H1 (cell line): ENCODE measurements at regions of chr16 and their contacts with region 1.

Region 1: GRCh38 chr16:66483689-66484481 is 56.8 kb downstream of the BEAN1 start:
- DNase-seq: peak; percentile 69 to 95
- H3K4me3 ChIP-seq: no peak overlapping the region
- H3K27ac ChIP-seq: no peak overlapping the region
- H3K4me1 ChIP-seq: peaks cover 0 to 5% (median 2%) of the 10 kb centered on the region in 4 experiments; a peak in 4 of 7 replicates
- H3K27me3 ChIP-seq: no peaks in the 10 kb centered on the region
- CTCF ChIP-seq: peak; percentile 97 to 99 (median 99)
- EP300 ChIP-seq: no peak
- POLR2A ChIP-seq: no peak
- RAD21 ChIP-seq: peak; percentile 95 to 97

Region 2: DNA sequence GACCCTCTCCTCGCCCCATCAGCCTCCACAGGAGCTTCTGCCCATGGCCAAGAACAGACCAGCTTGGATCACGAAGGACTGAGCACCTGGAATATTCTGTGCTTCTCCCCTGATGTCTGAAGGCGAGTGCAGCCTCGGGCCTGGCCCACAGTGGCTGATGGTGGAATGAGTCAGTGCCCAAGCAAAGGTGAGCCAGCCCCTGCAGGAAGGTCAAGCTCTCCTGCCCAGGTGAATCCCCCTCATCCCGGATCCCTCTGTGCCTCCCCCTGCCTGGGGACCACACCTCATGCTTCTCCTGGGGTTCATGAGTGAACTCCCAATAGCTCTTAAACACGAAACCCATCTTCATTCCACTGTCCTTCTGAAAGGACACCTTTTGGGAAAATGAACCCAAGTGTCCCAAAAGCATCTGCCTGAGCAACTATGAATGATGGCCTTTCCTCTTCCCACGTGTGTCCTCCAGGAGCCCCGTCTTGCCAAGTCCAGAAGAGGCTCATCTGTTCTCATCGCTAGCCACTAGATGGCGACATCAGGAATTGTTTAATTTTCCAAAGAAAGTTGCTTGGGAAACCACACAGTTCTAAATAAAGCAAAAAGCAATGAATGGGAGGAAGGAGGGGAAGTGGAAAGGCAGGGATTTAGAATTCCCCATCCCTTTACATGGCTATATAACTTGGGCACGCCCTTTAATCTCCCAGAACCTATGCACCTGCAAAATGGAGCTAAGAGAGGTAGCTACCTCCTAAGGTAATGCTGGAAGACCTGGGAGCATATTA is 126.5 kb before region 1 on chr16:
- CTCF ChIA-PET with region 1: interaction called, 14 read pairs
- POLR2A ChIA-PET with region 1: no interaction called
- DNase-seq: peak in 1 of 2 experiments; percentile 27
- H3K4me3 ChIP-seq: no peak overlapping the region
- H3K27ac ChIP-seq: no peak overlapping the region
- H3K4me1 ChIP-seq: peaks cover 0 to 8% (median 1%) of the 10 kb centered on the region in 4 experiments; a peak in 3 of 7 replicates
- H3K27me3 ChIP-seq: peaks cover 0 to 3% (median 0%) of the 10 kb centered on the region in 4 experiments; a peak in 1 of 7 replicates
- CTCF ChIP-seq: peak; percentile 42 to 76 (median 72)
- EP300 ChIP-seq: no peak
- POLR2A ChIP-seq: no peak
- RAD21 ChIP-seq: peak; percentile 44 to 56

Region 3: DNA sequence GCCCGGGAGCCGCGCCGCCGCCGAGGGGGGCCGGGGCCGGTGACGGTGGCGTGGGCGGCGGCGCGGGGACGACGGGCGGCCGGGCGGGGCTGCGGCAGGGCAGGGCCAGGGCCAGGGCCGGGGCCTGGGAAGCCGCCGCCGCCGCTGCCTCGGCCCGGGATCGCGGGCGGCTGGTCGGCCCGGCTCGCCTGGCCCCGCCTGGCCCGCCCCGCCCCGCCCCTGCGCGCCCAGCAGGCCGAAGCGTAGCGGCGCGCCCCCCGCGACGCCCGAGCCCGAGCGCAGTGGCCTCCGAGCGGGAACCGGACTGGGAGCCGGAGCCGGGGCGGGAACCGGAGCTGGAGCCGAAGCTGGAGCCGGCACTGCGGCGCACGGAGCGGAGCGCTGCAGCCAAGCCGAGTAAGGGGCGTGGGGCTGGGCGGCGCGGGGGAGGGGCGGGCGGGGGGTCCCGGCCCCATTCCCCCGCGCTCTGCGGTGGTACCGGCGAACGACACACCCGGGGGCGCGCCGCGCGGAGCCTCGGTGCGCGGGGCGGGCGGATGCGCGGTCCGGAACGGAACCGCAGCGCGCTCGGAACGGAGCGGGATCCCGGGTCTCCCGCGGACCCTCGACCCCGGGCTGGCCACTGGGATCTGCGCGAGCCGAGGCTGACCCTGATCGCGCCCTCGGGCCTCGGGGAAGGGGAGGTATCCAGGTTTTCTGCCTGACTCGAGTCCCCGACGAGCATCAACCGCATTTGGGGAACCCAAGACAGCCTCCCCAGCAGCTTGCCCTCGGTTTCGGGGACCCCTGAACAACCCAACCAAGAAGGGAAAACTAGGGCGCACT is 56.6 kb before region 1 on chr16 and contains the start of gene BEAN1:
- CTCF ChIA-PET with region 1: interaction called, 36 read pairs
- POLR2A ChIA-PET with region 1: no interaction called
- DNase-seq: peak in 1 of 2 experiments; percentile 66
- H3K4me3 ChIP-seq: peak within 1 kb of the TSS; percentile 42 to 65 (median 45)
- H3K27ac ChIP-seq: no peak within 1 kb of the TSS
- H3K4me1 ChIP-seq: peaks cover 0 to 29% (median 21%) of the 10 kb centered on the region in 4 experiments; a peak in 6 of 7 replicates
- H3K27me3 ChIP-seq: peaks cover 49 to 67% (median 59%) of the 10 kb centered on the region in 4 experiments
- CTCF ChIP-seq: no peak
- EP300 ChIP-seq: no peak
- POLR2A ChIP-seq: no peak
- RAD21 ChIP-seq: no peak
- total RNA-seq, gene BEAN1: not detected in 2 replicates

Region 4: DNA sequence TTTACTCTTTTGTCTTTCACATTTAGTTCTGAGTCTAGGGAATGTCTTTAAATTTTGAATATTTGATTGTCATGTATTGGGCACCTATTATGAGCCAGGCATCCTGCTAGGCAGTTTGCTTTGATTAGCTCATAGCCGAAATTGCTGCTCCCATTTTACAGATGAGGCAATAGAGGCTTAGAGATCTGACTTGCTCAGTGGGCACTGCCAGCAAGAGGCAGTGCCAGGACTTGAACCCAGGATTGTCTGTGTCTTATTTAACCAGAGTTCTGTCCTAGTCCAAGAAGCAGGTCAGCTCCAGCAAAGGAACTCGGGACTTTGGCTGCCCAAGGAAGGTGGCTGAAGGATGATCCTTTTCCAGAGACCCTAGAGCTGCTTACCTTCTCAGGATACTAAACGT is 32.3 kb before region 1 on chr16:
- CTCF ChIA-PET with region 1: interaction called, 18 read pairs
- POLR2A ChIA-PET with region 1: no interaction called
- DNase-seq: no peak
- H3K4me3 ChIP-seq: no peak overlapping the region
- H3K27ac ChIP-seq: no peak overlapping the region
- H3K4me1 ChIP-seq: no peaks in the 10 kb centered on the region
- H3K27me3 ChIP-seq: 0 out of 7 replicates have a peak, but pooled peaks cover 0 to 3% (median 0%) of the 10 kb centered on the region in 4 experiments
- CTCF ChIP-seq: no peak
- EP300 ChIP-seq: no peak
- POLR2A ChIP-seq: no peak
- RAD21 ChIP-seq: no peak

Region 5: DNA sequence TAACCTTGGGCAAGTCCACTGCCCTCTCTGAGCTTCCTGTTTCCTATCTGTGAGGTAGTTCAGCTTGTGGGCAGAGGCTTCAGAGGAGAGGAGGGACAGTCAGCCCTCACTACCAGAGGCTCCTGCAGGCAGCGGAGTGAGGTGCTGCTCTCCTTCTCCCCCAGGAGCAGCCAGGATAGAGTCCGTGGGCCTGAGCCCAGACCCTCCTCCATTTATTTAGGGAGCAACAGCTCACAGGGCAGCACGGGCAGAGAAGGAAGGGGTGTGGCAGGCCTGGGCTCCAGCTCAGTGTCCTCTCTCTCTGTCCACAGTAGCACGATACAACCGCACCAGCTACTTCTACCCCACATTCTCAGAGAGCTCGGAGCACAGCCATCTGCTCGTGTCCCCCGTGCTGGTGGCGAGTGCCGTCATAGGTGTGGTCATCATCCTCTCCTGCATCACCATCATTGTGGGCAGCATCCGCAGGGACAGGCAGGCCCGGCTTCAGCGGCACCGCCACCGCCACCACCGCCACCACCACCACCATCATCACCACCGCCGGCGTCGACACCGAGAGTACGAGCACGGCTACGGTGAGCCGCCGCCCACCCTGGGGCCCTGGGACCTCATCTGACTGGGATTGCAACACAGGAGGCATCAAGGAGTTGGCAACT is 14.5 kb before region 1 on chr16:
- CTCF ChIA-PET with region 1: interaction called, 10 read pairs
- POLR2A ChIA-PET with region 1: no interaction called
- DNase-seq: no peak
- H3K4me3 ChIP-seq: no peak overlapping the region
- H3K27ac ChIP-seq: no peak overlapping the region
- H3K4me1 ChIP-seq: no peaks in the 10 kb centered on the region; a peak in 1 of 7 replicates
- H3K27me3 ChIP-seq: no peaks in the 10 kb centered on the region; a peak in 2 of 7 replicates
- CTCF ChIP-seq: no peak
- EP300 ChIP-seq: no peak
- POLR2A ChIP-seq: no peak
- RAD21 ChIP-seq: no peak

Region 6: DNA sequence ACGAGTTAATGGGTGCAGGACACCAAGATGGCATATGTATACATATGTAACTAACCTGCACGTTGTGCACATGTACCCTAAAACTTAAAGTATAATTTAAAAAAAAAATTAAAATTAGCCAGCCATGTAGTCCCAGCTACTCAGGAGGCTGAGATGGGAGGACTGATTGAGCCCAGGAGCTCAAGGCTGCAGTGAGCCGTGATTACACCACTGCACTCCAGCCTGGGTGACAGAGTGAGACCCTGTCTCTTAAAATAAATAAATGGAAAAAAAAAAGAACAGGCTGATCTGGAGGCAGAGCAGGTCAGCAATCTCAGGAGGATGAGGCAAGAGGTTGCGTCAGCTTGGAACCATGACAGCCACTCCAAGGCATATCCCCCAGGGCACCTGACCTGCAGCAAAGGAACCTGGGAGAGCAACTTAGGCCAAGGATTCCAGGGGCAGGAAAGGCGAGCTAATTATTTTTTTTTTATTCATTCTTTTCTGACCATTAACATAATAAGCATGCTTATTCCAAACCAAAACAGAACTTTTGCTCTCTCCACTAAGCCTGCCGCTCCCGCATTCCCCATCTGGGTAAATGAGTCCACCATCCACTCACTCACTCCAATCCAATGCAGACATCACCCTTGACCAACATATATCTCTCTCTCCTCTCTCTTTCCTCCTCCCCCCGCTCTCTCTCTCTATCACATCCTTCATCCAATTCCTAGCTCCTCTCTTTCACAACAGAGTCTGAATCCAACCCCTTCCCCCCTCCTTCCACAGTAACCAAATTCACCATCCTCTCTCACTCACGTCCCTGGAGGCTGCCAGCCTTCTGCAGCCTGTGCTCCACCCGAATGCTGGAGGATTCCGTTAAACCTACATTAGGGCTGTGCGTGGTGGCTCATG is 18.4 kb after region 1 on chr16:
- CTCF ChIA-PET with region 1: no interaction called
- POLR2A ChIA-PET with region 1: no interaction called
- DNase-seq: no peak
- H3K4me3 ChIP-seq: no peak overlapping the region
- H3K27ac ChIP-seq: no peak overlapping the region
- H3K4me1 ChIP-seq: peaks cover 0 to 2% (median 0%) of the 10 kb centered on the region in 4 experiments; a peak in 1 of 7 replicates
- H3K27me3 ChIP-seq: no peaks in the 10 kb centered on the region
- CTCF ChIP-seq: no peak
- EP300 ChIP-seq: no peak
- POLR2A ChIP-seq: no peak
- RAD21 ChIP-seq: no peak

Region 7: DNA sequence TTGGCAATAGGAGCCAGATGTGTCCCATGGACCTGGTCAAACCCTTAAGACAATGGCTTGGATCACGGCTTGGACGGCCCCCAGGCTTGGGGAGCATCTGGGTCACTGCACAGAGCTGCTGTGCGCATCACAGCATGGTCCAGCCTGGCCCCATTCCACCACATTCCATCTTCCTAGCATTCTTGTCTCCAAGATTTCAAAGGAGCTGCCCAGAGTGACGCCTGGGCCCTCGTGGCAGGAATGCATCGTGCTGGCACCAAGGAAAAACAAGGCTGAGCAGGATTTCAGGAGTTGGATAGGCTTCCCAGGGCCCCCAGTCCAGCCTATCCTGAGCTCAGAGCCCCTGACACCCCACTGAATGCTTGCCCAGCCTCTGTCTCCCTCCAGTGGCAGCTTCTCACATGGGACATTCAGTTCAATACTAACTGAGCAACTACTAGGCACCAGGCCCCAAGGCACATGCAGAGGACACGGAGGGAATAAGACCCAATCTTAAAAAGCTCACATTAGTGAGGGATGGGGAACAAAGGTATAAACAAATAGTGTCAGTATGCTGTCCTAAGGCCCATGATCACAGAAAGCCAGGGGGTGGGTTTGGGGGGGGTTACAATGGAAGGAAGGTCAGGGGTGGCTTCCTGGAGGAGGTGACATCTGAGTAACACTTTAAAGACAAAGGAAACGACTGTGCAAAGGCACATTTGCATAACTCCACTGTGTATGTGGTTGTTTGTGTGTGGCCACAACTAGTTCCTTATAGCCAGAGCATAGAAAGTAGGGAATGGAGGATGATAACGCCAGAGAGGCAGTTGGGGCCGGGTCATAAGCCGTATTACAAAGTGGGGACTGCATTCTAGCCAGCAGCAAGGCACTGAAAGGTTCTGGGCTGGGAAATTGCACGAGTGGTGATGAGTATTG is 32.0 kb after region 1 on chr16:
- CTCF ChIA-PET with region 1: interaction called, 13 read pairs
- POLR2A ChIA-PET with region 1: interaction called, 3 read pairs
- DNase-seq: peak; percentile 13 to 60
- H3K4me3 ChIP-seq: no peak overlapping the region
- H3K27ac ChIP-seq: no peak overlapping the region
- H3K4me1 ChIP-seq: peaks cover 7 to 19% (median 9%) of the 10 kb centered on the region in 4 experiments; a peak in 6 of 7 replicates
- H3K27me3 ChIP-seq: no peaks in the 10 kb centered on the region
- CTCF ChIP-seq: peak; percentile 51 to 69 (median 67)
- EP300 ChIP-seq: no peak
- POLR2A ChIP-seq: no peak
- RAD21 ChIP-seq: peak; percentile 73 to 86